ENCODE measurements at regions of chr1 and their contacts with region 1.

Region 1: DNA sequence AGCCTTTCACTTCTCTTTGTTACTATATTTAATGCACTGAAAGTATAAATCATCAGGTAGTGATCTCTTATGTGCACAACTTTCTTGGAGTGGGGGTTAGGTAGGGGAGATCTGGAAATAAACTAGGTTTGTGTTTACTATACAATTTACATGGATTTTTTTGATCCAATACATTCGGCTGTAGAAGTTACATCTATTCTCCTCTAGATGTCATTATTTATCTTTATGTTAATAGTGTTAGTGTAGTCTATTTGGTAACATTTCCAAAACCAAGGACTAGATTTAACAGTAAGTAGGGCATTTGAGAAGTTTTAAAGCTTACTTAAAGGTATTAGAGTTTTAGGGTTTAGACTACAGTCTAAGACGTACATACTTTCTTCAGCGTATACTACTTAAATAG is 5.4 kb downstream of the VPS45 start:
- DNase-seq: peak; percentile 58
- ATAC-seq: peak; percentile 78
- H3K4me3 ChIP-seq: no peak overlapping the region
- H3K4me3 Mint-ChIP-seq: no peak overlapping the region
- H3K27ac ChIP-seq: no peak overlapping the region
- H3K27ac Mint-ChIP-seq: peak overlapping the region; percentile 64
- H3K4me1 ChIP-seq: peaks cover 0 to 14% of the 10 kb centered on the region in 2 donors
- H3K4me1 Mint-ChIP-seq: peaks cover 37% of the 10 kb centered on the region
- H3K27me3 ChIP-seq: no peaks in the 10 kb centered on the region
- H3K27me3 Mint-ChIP-seq: no peaks in the 10 kb centered on the region
- CTCF ChIP-seq: peak; percentile 78

Region 2: DNA sequence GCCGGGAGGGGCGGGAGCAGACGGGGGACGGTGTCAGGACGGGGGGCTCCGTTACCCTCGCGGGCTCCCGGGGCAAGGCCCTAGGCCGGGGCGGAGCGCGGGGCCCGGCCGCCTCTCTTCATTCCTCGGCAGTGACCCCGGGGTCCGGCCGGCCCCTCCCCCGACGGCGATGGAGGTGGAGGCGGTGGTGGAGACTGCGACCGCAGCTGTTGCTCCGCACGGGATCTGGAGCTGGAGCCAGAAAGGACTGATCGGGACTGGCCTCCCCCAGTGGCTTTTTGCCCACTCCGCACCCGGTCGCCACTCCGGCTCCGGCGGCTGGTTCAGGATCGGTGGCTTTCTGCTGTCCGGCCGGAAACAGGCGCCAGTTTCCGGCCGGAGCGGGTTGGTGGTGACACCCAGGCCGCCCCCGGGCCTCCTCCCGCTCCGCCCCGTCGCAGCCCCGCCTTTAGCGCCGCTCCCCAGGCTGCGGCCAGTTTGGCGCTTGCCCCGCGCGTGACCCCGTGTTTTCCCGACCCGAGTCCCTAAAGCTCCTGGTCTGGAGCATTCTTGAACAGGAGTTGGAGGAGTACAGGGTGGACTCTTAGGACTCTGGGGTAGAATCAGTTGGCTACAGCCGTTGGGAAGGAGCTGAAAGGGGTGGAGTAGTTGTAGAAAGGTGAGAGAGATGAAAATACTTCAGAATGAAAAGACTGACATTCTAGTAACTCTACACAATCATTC is 62.4 kb before region 1 on chr1 and contains the start of gene OTUD7B:
- CTCF ChIA-PET with region 1: no interaction called
- POLR2A ChIA-PET with region 1: no interaction called
- intact Hi-C with region 1: no loop called
- DNase-seq: peak; percentile 75
- ATAC-seq: peak; percentile 87
- H3K4me3 ChIP-seq: peak within 1 kb of the TSS; percentile 0 to 87 (median 82)
- H3K4me3 Mint-ChIP-seq: peak within 1 kb of the TSS; percentile 92
- H3K27ac ChIP-seq: no peak within 1 kb of the TSS
- H3K27ac Mint-ChIP-seq: peak within 1 kb of the TSS; percentile 56
- H3K4me1 ChIP-seq: peaks cover 15 to 16% of the 10 kb centered on the region in 2 donors
- H3K4me1 Mint-ChIP-seq: peaks cover 12% of the 10 kb centered on the region
- H3K27me3 ChIP-seq: peaks cover 3 to 69% (median 49%) of the 10 kb centered on the region in 4 experiments
- H3K27me3 Mint-ChIP-seq: peaks cover 50% of the 10 kb centered on the region
- CTCF ChIP-seq: no peak
- total RNA-seq, gene OTUD7B: 3.3 and 4.1 TPM in 2 replicates

Region 3: DNA sequence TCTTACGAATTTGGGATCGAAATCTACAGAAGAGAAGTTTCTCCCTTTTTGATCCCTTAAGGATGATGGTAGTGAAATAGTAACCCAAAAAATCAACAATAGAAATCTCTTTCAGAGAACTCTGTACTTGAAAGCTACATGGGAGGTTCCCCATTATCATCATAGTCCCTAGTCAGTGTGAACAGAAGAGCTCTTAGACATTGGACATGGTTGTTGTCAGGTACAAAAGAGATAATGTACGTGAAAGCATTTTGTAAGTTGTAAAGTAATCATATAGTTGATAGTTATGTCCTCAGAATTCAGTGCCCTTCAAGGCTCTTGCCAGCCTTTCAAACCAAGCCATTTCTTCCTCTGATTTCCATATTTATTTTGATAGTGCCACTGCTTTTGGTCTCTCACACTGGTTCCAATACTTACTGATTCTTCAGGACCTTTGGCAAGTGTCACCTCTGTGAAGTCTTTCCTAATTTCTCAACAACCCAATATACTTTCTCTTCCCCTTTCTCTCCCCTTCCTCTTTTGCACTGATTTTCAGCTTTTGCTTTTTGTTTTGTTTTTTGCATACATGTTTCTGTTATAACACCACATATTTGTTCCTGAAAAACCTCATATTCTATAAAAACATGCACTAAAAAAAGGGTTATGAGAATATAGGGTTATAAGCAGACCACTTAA is 17.0 kb after region 1 on chr1:
- CTCF ChIA-PET with region 1: interaction called, 11 read pairs
- POLR2A ChIA-PET with region 1: interaction called, 4 read pairs
- intact Hi-C with region 1: no loop called
- DNase-seq: peak; percentile 75
- ATAC-seq: peak; percentile 80
- H3K4me3 ChIP-seq: peak overlapping the region in 4 of 5 experiments; percentile 0 to 45 (median 15)
- H3K4me3 Mint-ChIP-seq: peak overlapping the region; percentile 71
- H3K27ac ChIP-seq: peak overlapping the region; percentile 75 to 85
- H3K27ac Mint-ChIP-seq: peak overlapping the region; percentile 91
- H3K4me1 ChIP-seq: peaks cover 25 to 27% of the 10 kb centered on the region in 2 donors
- H3K4me1 Mint-ChIP-seq: peaks cover 38% of the 10 kb centered on the region
- H3K27me3 ChIP-seq: no peaks in the 10 kb centered on the region
- H3K27me3 Mint-ChIP-seq: no peaks in the 10 kb centered on the region
- CTCF ChIP-seq: no peak

Region 4: GRCh38 chr1:150149271-150150132 is 76.5 kb after region 1 on chr1 and contains the start of gene PLEKHO1:
- CTCF ChIA-PET with region 1: interaction called, 26 read pairs
- POLR2A ChIA-PET with region 1: interaction called, 5 read pairs
- intact Hi-C with region 1: no loop called
- DNase-seq: peak; percentile 92
- ATAC-seq: peak; percentile 78
- H3K4me3 ChIP-seq: peak within 1 kb of the TSS; percentile 73 to 96 (median 94)
- H3K4me3 Mint-ChIP-seq: peak within 1 kb of the TSS; percentile 98
- H3K27ac ChIP-seq: peak within 1 kb of the TSS; percentile 80 to 95
- H3K27ac Mint-ChIP-seq: peak within 1 kb of the TSS; percentile 99
- H3K4me1 ChIP-seq: peaks cover 52 to 56% of the 10 kb centered on the region in 2 donors
- H3K4me1 Mint-ChIP-seq: peaks cover 68% of the 10 kb centered on the region
- H3K27me3 ChIP-seq: no peaks in the 10 kb centered on the region
- H3K27me3 Mint-ChIP-seq: no peaks in the 10 kb centered on the region
- CTCF ChIP-seq: no peak
- total RNA-seq, gene PLEKHO1: 182 and 186 TPM in 2 replicates

Region 5: GRCh38 chr1:150168960-150169601 is 96.1 kb after region 1 on chr1:
- CTCF ChIA-PET with region 1: interaction called, 637 read pairs
- POLR2A ChIA-PET with region 1: interaction called, 8 read pairs
- intact Hi-C with region 1: loop called (anchors 1 kb)
- DNase-seq: peak; percentile 68
- ATAC-seq: peak; percentile 59
- H3K4me3 ChIP-seq: no peak overlapping the region
- H3K4me3 Mint-ChIP-seq: no peak overlapping the region
- H3K27ac ChIP-seq: no peak overlapping the region
- H3K27ac Mint-ChIP-seq: no peak overlapping the region
- H3K4me1 ChIP-seq: peaks cover 27 to 35% of the 10 kb centered on the region in 2 donors
- H3K4me1 Mint-ChIP-seq: peaks cover 29% of the 10 kb centered on the region
- H3K27me3 ChIP-seq: no peaks in the 10 kb centered on the region
- H3K27me3 Mint-ChIP-seq: no peaks in the 10 kb centered on the region
- CTCF ChIP-seq: peak; percentile 58

Region 6: DNA sequence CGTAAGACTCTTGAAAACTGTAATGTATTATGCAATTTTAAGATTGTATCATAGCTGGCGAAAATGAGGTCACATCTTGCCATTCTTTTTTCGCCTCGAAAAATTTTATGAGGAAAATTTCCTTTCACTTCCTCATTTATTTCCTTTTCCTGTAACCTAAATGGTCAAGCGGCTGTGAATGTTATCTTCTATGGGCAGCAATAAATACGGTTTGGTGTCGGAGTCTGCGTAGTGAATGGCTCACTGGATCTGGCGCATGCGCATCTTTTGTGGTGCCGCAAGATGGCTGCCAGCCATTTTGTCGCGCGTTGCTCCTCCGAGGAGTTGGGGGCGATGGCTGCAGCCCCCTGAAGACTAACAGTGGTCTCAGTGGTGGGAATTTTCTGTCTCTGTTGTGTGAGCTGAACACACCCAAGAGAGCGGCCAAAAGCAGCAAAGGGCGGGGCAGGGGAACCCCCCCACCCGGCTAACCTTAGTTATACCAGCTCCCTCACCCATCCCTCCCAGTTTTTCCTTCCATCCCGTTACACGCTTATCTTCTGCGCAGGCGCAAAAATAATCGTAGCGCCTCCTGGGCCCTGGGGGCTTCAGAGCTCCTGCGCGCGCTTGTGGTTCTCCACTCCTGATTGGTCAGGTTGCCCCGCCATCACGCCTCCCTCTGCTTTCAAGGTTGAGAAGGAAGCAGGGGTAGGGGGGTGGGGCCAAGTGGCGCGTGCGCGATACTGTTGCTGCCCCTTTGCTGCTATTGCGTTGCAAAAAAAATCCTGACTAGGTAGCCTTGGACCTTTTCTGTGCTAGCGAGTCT is 290.7 kb after region 1 on chr1 and contains the start of gene RPRD2:
- CTCF ChIA-PET with region 1: no interaction called
- POLR2A ChIA-PET with region 1: no interaction called
- intact Hi-C with region 1: loop called (anchors 5 kb)
- DNase-seq: peak; percentile 99
- ATAC-seq: peak; percentile 94
- H3K4me3 ChIP-seq: peak within 1 kb of the TSS; percentile 74 to 99 (median 90)
- H3K4me3 Mint-ChIP-seq: peak within 1 kb of the TSS; percentile 99
- H3K27ac ChIP-seq: peak within 1 kb of the TSS; percentile 87 to 90
- H3K27ac Mint-ChIP-seq: peak within 1 kb of the TSS; percentile 99
- H3K4me1 ChIP-seq: peaks cover 21 to 24% of the 10 kb centered on the region in 2 donors
- H3K4me1 Mint-ChIP-seq: peaks cover 31% of the 10 kb centered on the region
- H3K27me3 ChIP-seq: no peaks in the 10 kb centered on the region
- H3K27me3 Mint-ChIP-seq: no peaks in the 10 kb centered on the region
- CTCF ChIP-seq: no peak
- total RNA-seq, gene RPRD2: 49.1 and 51.4 TPM in 2 replicates